ENCODE measurements at regions of chr1 and their contacts with region 1.

Region 1: GRCh38 chr1:156226116-156226538 is 13.3 kb downstream of the PMF1 start:
- DNase-seq: no peak
- H3K4me3 Mint-ChIP-seq: no peak overlapping the region
- H3K27ac Mint-ChIP-seq: no peak overlapping the region
- H3K4me1 Mint-ChIP-seq: peaks cover 24% of the 10 kb centered on the region
- H3K27me3 Mint-ChIP-seq: no peaks in the 10 kb centered on the region
- CTCF ChIP-seq: no peak

Region 2: DNA sequence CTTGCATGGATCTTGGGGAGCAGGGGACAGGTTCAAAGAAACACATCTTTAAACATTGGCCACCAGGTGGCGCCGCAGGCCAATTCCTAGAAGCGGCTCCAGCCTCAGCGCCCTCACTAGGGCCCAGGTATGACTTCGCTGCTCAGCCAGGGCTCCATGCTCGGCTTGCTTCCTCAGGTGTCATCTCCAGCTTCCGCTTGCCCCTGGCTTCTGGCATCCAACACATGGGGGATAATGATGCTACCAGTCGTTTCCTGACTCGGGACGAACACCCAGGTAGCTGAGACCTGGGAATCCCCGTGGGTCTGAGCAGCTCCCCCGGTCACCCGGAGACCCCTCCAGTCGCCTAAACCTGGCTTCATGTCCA is 135.3 kb before region 1 on chr1:
- CTCF ChIA-PET with region 1: interaction called, 524 read pairs
- POLR2A ChIA-PET with region 1: interaction called, 4 read pairs
- intact Hi-C with region 1: loop called (anchors 1 kb)
- DNase-seq: peak; percentile 95
- H3K4me3 Mint-ChIP-seq: no peak overlapping the region
- H3K27ac Mint-ChIP-seq: no peak overlapping the region
- H3K4me1 Mint-ChIP-seq: peaks cover 8% of the 10 kb centered on the region
- H3K27me3 Mint-ChIP-seq: no peaks in the 10 kb centered on the region
- CTCF ChIP-seq: peak; percentile 98

Region 3: DNA sequence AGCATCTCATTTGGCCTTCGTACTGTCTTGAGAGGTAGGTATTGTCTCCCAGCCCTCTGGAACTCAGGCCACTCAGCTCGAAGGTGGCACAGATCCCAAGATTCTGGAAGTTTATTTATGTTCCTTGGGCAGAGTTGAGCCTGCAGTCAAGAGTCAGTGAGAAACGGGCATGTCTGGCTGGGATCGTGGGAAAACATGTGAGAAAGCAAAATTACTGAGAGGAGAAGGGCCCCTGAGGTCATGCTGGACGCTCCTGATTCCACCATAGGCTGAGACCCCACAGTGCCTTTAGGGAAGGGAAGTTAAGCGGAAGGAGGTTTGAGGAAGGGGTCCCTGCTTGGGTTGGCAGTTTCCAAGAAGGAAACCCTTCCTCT is 85.3 kb before region 1 on chr1:
- CTCF ChIA-PET with region 1: interaction called, 198 read pairs
- POLR2A ChIA-PET with region 1: interaction called, 20 read pairs
- intact Hi-C with region 1: loop called (anchors 1 kb)
- DNase-seq: no peak
- H3K4me3 Mint-ChIP-seq: no peak overlapping the region
- H3K27ac Mint-ChIP-seq: no peak overlapping the region
- H3K4me1 Mint-ChIP-seq: peaks cover 24% of the 10 kb centered on the region
- H3K27me3 Mint-ChIP-seq: no peaks in the 10 kb centered on the region
- CTCF ChIP-seq: no peak

Region 4: DNA sequence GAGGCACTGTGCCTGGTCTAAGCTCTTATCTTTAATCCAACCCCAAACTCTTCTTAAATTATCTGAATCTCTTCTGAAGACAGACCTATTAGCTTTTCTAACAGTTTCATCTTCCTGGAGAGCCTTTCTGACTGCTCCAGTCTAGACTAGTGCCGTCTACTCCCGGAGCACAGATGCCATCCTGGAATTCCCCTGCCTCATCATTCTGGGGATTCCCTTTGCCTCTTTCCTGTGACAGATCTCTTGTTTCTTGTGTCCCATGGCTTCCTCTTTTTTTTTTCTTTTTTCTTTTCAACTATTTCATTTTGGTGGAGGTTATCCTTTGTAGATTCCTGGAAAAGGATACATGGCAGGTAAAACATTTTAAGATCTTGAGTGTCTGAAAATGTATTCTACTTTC is 61.0 kb before region 1 on chr1:
- CTCF ChIA-PET with region 1: interaction called, 22 read pairs
- POLR2A ChIA-PET with region 1: no interaction called
- intact Hi-C with region 1: no loop called
- DNase-seq: no peak
- H3K4me3 Mint-ChIP-seq: no peak overlapping the region
- H3K27ac Mint-ChIP-seq: no peak overlapping the region
- H3K4me1 Mint-ChIP-seq: peaks cover under 1% of the 10 kb centered on the region
- H3K27me3 Mint-ChIP-seq: peaks cover 18% of the 10 kb centered on the region
- CTCF ChIP-seq: no peak

Region 5: DNA sequence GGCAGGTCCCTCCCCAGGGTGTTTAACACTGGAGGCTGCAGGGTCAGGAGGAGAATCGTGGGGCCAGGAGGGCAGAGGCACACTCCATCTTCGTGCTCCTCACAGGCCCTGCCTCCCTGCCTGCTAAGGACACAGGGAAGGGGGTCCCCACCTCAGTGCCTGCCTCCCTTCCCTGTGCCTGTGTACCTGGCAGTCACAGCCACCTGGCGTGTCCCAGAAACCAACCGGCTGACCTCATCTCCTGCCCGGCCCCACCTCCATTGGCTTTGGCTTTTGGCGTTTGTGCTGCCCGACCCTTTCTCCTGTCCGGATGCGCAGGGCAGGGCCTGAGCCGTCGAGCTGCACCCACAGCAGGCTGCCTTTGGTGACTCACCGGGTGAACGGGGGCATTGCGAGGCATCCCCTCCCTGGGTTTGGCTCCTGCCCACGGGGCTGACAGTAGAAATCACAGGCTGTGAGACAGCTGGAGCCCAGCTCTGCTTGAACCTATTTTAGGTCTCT is 15.2 kb after region 1 on chr1:
- CTCF ChIA-PET with region 1: interaction called, 21 read pairs
- POLR2A ChIA-PET with region 1: interaction called, 7 read pairs
- intact Hi-C with region 1: no loop called
- DNase-seq: peak; percentile 91
- H3K4me3 Mint-ChIP-seq: no peak overlapping the region
- H3K27ac Mint-ChIP-seq: peak overlapping the region; percentile 42
- H3K4me1 Mint-ChIP-seq: peaks cover 22% of the 10 kb centered on the region
- H3K27me3 Mint-ChIP-seq: no peaks in the 10 kb centered on the region
- CTCF ChIP-seq: no peak

Region 6: GRCh38 chr1:156253634-156254033 is 27.5 kb after region 1 on chr1:
- CTCF ChIA-PET with region 1: interaction called, 15 read pairs
- POLR2A ChIA-PET with region 1: no interaction called
- intact Hi-C with region 1: no loop called
- DNase-seq: no peak
- H3K4me3 Mint-ChIP-seq: no peak overlapping the region
- H3K27ac Mint-ChIP-seq: no peak overlapping the region
- H3K4me1 Mint-ChIP-seq: peaks cover 13% of the 10 kb centered on the region
- H3K27me3 Mint-ChIP-seq: no peaks in the 10 kb centered on the region
- CTCF ChIP-seq: no peak

Region 7: GRCh38 chr1:156282479-156283222 is 56.5 kb after region 1 on chr1 and contains the start of gene SMG5:
- CTCF ChIA-PET with region 1: interaction called, 12 read pairs
- POLR2A ChIA-PET with region 1: interaction called, 4 read pairs
- intact Hi-C with region 1: no loop called
- DNase-seq: peak; percentile 100
- H3K4me3 Mint-ChIP-seq: peak within 1 kb of the TSS; percentile 92
- H3K27ac Mint-ChIP-seq: peak within 1 kb of the TSS; percentile 93
- H3K4me1 Mint-ChIP-seq: peaks cover 38% of the 10 kb centered on the region
- H3K27me3 Mint-ChIP-seq: no peaks in the 10 kb centered on the region
- CTCF ChIP-seq: no peak
- total RNA-seq, gene SMG5: 118 and 140 TPM in 2 replicates

Region 8: GRCh38 chr1:156338180-156338973 is 112.2 kb after region 1 on chr1 and contains the starts of genes CCT3 and TSACC:
- CTCF ChIA-PET with region 1: no interaction called
- POLR2A ChIA-PET with region 1: no interaction called
- intact Hi-C with region 1: no loop called
- DNase-seq: peak; percentile 100
- H3K4me3 Mint-ChIP-seq: peak within 1 kb of the TSS; percentile 96
- H3K27ac Mint-ChIP-seq: peak within 1 kb of the TSS; percentile 76
- H3K4me1 Mint-ChIP-seq: peaks cover 24% of the 10 kb centered on the region
- H3K27me3 Mint-ChIP-seq: no peaks in the 10 kb centered on the region
- CTCF ChIP-seq: no peak
- total RNA-seq, gene CCT3: 495 and 574 TPM in 2 replicates
- total RNA-seq, gene TSACC: 1.8 and 3.6 TPM in 2 replicates

Measured in MCF 10A (cell line).